PC-3 (cell line): ENCODE measurements at regions of chr14 and their contacts with region 1.

Region 1: GRCh38 chr14:31510222-31510621 is 22.4 kb upstream of the GPR33 start:
- DNase-seq: peak; percentile 58
- ATAC-seq: peak; percentile 38
- H3K4me3 ChIP-seq: no peak overlapping the region
- H3K27ac ChIP-seq: no peak overlapping the region
- H3K4me1 ChIP-seq: no peaks in the 10 kb centered on the region
- H3K27me3 ChIP-seq: no peaks in the 10 kb centered on the region
- CTCF ChIP-seq: peak; percentile 87

Region 2: GRCh38 chr14:31895206-31895605 is 385.0 kb after region 1 on chr14:
- CTCF ChIA-PET with region 1: no interaction called
- POLR2A ChIA-PET with region 1: no interaction called
- intact Hi-C with region 1: loop called (anchors 2 kb)
- DNase-seq: peak; percentile 84
- ATAC-seq: peak; percentile 61
- H3K4me3 ChIP-seq: no peak overlapping the region
- H3K27ac ChIP-seq: peak overlapping the region; percentile 59
- H3K4me1 ChIP-seq: peaks cover 36% of the 10 kb centered on the region
- H3K27me3 ChIP-seq: no peaks in the 10 kb centered on the region
- CTCF ChIP-seq: no peak

Region 3: GRCh38 chr14:31926123-31926522 is 415.9 kb after region 1 on chr14:
- CTCF ChIA-PET with region 1: interaction called, 3 read pairs
- POLR2A ChIA-PET with region 1: no interaction called
- intact Hi-C with region 1: loop called (anchors 2 kb)
- DNase-seq: peak; percentile 64
- ATAC-seq: no peak
- H3K4me3 ChIP-seq: no peak overlapping the region
- H3K27ac ChIP-seq: no peak overlapping the region
- H3K4me1 ChIP-seq: peaks cover 20% of the 10 kb centered on the region; the same call in 1 of the 2 replicates
- H3K27me3 ChIP-seq: no peaks in the 10 kb centered on the region
- CTCF ChIP-seq: peak; percentile 89

Region 4: GRCh38 chr14:32560209-32560857 is 1050.1 kb after region 1 on chr14:
- CTCF ChIA-PET with region 1: no interaction called
- POLR2A ChIA-PET with region 1: no interaction called
- intact Hi-C with region 1: loop called (anchors 10 kb)
- DNase-seq: peak; percentile 84
- ATAC-seq: peak; percentile 61
- H3K4me3 ChIP-seq: no peak overlapping the region
- H3K27ac ChIP-seq: no peak overlapping the region
- H3K4me1 ChIP-seq: peaks cover 30% of the 10 kb centered on the region
- H3K27me3 ChIP-seq: no peaks in the 10 kb centered on the region
- CTCF ChIP-seq: peak; percentile 97